SK-N-SH (cell line): ENCODE measurements at regions of chr13 and their contacts with region 1.

Region 1: GRCh38 chr13:78978381-78978998 is 319.5 kb upstream of the OBI1 start:
- DNase-seq: peak; percentile 34
- H3K4me3 ChIP-seq: no peak overlapping the region; a peak in 1 of 4 replicates
- H3K27ac ChIP-seq: no peak overlapping the region
- H3K4me1 ChIP-seq: no peaks in the 10 kb centered on the region
- H3K27me3 ChIP-seq: no peaks in the 10 kb centered on the region
- CTCF ChIP-seq: peak; percentile 74
- EP300 ChIP-seq: no peak
- RAD21 ChIP-seq: peak; percentile 89

Region 2: DNA sequence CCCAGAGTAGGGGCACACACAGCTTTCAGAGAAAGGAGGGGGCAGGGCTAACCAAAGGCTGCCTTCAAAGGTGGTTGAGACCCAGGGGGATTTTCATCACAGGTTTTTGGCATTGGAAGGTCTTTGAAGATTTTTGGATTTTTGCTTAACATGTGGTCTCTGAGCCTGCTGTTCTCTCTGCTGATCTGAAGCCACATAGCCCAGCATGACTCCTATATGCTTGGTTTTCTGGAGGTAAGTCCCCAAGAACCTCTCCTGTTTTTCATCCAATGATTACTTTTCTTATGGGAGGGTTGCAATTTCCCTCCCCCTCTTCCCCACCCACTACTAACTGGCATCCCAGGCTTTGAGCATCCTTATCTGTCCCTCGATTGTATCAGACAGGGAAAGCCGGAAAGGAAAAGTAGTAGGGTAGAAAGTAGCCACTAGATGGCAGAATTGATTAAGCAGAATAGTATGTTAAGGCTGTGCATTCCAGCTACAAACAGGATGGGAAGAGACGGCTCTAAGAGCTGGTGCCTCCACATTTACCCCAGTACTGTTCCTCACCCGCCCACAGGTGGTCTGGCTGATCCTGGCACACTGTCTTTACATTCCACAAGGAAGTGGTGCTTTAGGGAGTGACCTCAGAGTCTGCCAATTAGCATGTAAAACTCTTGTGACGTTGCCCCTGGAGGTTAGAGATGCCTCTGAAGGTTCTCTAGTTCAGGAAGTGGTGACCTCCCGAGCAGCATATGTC is 840.9 kb before region 1 on chr13:
- CTCF ChIA-PET with region 1: interaction called, 28 read pairs
- POLR2A ChIA-PET with region 1: no interaction called
- DNase-seq: peak; percentile 59
- H3K4me3 ChIP-seq: peak overlapping the region in 1 of 2 experiments; percentile 9; a peak in 2 of 4 replicates
- H3K27ac ChIP-seq: no peak overlapping the region
- H3K4me1 ChIP-seq: peaks cover 0 to 11% of the 10 kb centered on the region in 2 experiments; a peak in 2 of 4 replicates
- H3K27me3 ChIP-seq: no peaks in the 10 kb centered on the region
- CTCF ChIP-seq: peak; percentile 84
- EP300 ChIP-seq: no peak
- RAD21 ChIP-seq: peak; percentile 86

Region 3: DNA sequence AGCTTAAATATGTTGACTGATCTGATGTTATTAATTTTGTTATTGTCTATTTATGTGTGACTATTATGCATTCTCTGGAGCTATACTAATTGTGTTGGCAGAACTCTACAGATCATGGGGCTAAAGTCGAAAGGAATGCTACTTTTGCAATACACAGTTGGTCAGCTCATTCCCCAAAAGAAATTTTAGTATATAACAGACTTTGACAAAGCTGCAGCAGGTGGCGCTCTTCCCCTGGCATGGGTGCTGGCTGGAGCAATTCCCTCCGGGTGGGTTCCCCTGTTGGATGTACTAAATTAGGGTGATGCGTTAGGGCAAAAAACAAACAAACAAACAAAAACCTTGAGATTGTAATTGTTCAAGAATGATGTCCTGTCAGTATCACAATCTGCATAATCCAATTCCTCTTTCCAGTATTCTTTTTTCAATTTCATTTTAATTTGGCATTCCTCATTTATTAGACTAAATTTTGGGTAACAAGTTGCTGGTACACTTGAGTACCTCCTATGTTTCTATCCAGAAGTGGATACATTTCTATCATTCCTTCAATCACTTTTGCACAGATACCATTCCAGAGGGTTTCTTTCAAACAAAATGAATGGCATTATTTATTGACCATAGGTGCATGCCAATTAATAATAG is 737.1 kb before region 1 on chr13:
- CTCF ChIA-PET with region 1: interaction called, 40 read pairs
- POLR2A ChIA-PET with region 1: no interaction called
- DNase-seq: peak; percentile 49
- H3K4me3 ChIP-seq: no peak overlapping the region
- H3K27ac ChIP-seq: no peak overlapping the region
- H3K4me1 ChIP-seq: no peaks in the 10 kb centered on the region
- H3K27me3 ChIP-seq: no peaks in the 10 kb centered on the region
- CTCF ChIP-seq: peak; percentile 77
- EP300 ChIP-seq: no peak
- RAD21 ChIP-seq: peak; percentile 93

Region 4: GRCh38 chr13:78958006-78958405 is 20.5 kb before region 1 on chr13:
- CTCF ChIA-PET with region 1: interaction called, 13 read pairs
- POLR2A ChIA-PET with region 1: no interaction called
- DNase-seq: no peak
- H3K4me3 ChIP-seq: no peak overlapping the region
- H3K27ac ChIP-seq: no peak overlapping the region
- H3K4me1 ChIP-seq: no peaks in the 10 kb centered on the region; a peak in 1 of 4 replicates
- H3K27me3 ChIP-seq: no peaks in the 10 kb centered on the region
- CTCF ChIP-seq: no peak
- EP300 ChIP-seq: no peak
- RAD21 ChIP-seq: no peak

Region 5: GRCh38 chr13:78993792-78994191 is 15.3 kb after region 1 on chr13:
- CTCF ChIA-PET with region 1: interaction called, 15 read pairs
- POLR2A ChIA-PET with region 1: no interaction called
- DNase-seq: no peak
- H3K4me3 ChIP-seq: no peak overlapping the region
- H3K27ac ChIP-seq: no peak overlapping the region
- H3K4me1 ChIP-seq: no peaks in the 10 kb centered on the region; a peak in 1 of 4 replicates
- H3K27me3 ChIP-seq: no peaks in the 10 kb centered on the region
- CTCF ChIP-seq: no peak
- EP300 ChIP-seq: no peak
- RAD21 ChIP-seq: no peak